GM12878 (cell line): ENCODE measurements at regions of chr3 and their contacts with region 1.

Region 1: GRCh38 chr3:8301728-8302462 is 199.7 kb upstream of the LMCD1 start:
- DNase-seq: no peak
- ATAC-seq: peak; percentile 73
- H3K4me3 ChIP-seq: no peak overlapping the region
- H3K27ac ChIP-seq: no peak overlapping the region
- H3K4me1 ChIP-seq: no peaks in the 10 kb centered on the region
- H3K27me3 ChIP-seq: no peaks in the 10 kb centered on the region
- CTCF ChIP-seq: peak; percentile 62 to 71 (median 65)
- EP300 ChIP-seq: no peak
- POLR2A ChIP-seq: no peak
- RAD21 ChIP-seq: peak; percentile 56

Region 2: GRCh38 chr3:7682822-7683229 is 619.1 kb before region 1 on chr3:
- CTCF ChIA-PET with region 1: no interaction called
- POLR2A ChIA-PET with region 1: no interaction called
- RAD21 ChIA-PET with region 1: no interaction called
- SMC1A ChIA-PET with region 1: no interaction called
- in situ Hi-C with region 1: no loop called
- intact Hi-C with region 1: no loop called
- DNase-seq: no peak
- ATAC-seq: no peak
- H3K4me3 ChIP-seq: no peak overlapping the region
- H3K27ac ChIP-seq: no peak overlapping the region
- H3K4me1 ChIP-seq: no peaks in the 10 kb centered on the region
- H3K27me3 ChIP-seq: no peaks in the 10 kb centered on the region
- CTCF ChIP-seq: no peak
- EP300 ChIP-seq: no peak
- POLR2A ChIP-seq: no peak
- RAD21 ChIP-seq: no peak

Region 3: DNA sequence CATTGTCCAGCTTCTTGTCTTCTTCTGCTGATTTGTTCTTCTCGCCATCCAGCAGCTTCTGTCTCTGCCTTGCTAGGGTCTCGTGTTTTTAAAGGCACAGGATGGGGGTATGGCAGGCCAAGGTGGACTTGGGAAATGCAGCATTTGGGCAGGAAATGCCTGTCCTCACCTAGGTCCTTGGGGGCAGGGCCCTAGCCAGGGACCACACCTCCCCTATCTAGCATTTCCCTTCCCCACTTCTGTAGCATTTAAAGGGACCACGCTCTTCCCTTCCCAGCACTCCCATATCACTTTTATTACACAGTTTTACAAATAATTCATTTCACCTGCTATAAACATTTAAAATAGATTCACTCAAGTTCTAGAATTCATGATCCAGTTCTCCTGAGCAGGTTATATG is 115.7 kb before region 1 on chr3:
- CTCF ChIA-PET with region 1: no interaction called
- POLR2A ChIA-PET with region 1: no interaction called
- RAD21 ChIA-PET with region 1: no interaction called
- SMC1A ChIA-PET with region 1: no interaction called
- in situ Hi-C with region 1: no loop called
- intact Hi-C with region 1: no loop called
- DNase-seq: no peak
- ATAC-seq: no peak
- H3K4me3 ChIP-seq: no peak overlapping the region
- H3K27ac ChIP-seq: no peak overlapping the region
- H3K4me1 ChIP-seq: no peaks in the 10 kb centered on the region
- H3K27me3 ChIP-seq: no peaks in the 10 kb centered on the region
- CTCF ChIP-seq: no peak
- EP300 ChIP-seq: no peak
- POLR2A ChIP-seq: no peak
- RAD21 ChIP-seq: no peak

Region 4: DNA sequence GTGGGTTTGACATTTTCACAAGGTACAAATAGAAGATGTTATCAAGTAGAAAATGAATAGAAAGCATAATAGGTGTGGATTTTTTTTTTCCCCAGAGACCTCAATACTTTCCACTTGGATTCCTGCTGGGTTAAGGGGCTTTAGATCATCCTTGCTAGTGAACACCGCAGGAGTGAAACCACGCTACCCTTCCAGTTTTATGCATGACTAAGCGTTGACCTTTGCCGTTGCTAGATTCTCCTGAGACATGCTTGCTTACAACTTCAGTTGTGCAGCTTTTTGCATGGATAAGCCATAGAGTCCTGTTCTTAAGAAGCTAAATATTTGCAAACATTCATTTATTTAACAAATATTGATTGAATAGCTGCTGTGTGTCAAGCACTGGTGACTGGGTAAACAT is 100.0 kb before region 1 on chr3:
- CTCF ChIA-PET with region 1: no interaction called
- POLR2A ChIA-PET with region 1: no interaction called
- RAD21 ChIA-PET with region 1: no interaction called
- SMC1A ChIA-PET with region 1: no interaction called
- in situ Hi-C with region 1: no loop called
- intact Hi-C with region 1: no loop called
- DNase-seq: no peak
- ATAC-seq: no peak
- H3K4me3 ChIP-seq: no peak overlapping the region
- H3K27ac ChIP-seq: no peak overlapping the region
- H3K4me1 ChIP-seq: no peaks in the 10 kb centered on the region
- H3K27me3 ChIP-seq: no peaks in the 10 kb centered on the region
- CTCF ChIP-seq: no peak
- EP300 ChIP-seq: no peak
- POLR2A ChIP-seq: no peak
- RAD21 ChIP-seq: no peak

Region 5: GRCh38 chr3:8286749-8287148 is 15.1 kb before region 1 on chr3:
- CTCF ChIA-PET with region 1: interaction called, 16 read pairs
- POLR2A ChIA-PET with region 1: no interaction called
- RAD21 ChIA-PET with region 1: no interaction called
- SMC1A ChIA-PET with region 1: no interaction called
- in situ Hi-C with region 1: no loop called
- intact Hi-C with region 1: no loop called
- DNase-seq: no peak
- ATAC-seq: no peak
- H3K4me3 ChIP-seq: no peak overlapping the region
- H3K27ac ChIP-seq: no peak overlapping the region
- H3K4me1 ChIP-seq: no peaks in the 10 kb centered on the region
- H3K27me3 ChIP-seq: no peaks in the 10 kb centered on the region
- CTCF ChIP-seq: no peak
- EP300 ChIP-seq: no peak
- POLR2A ChIP-seq: no peak
- RAD21 ChIP-seq: no peak

Region 6: GRCh38 chr3:8380904-8381704 is 79.2 kb after region 1 on chr3:
- CTCF ChIA-PET with region 1: no interaction called
- POLR2A ChIA-PET with region 1: no interaction called
- RAD21 ChIA-PET with region 1: no interaction called
- SMC1A ChIA-PET with region 1: no interaction called
- in situ Hi-C with region 1: no loop called
- intact Hi-C with region 1: no loop called
- DNase-seq: no peak
- ATAC-seq: no peak
- H3K4me3 ChIP-seq: no peak overlapping the region
- H3K27ac ChIP-seq: no peak overlapping the region
- H3K4me1 ChIP-seq: no peaks in the 10 kb centered on the region
- H3K27me3 ChIP-seq: no peaks in the 10 kb centered on the region
- CTCF ChIP-seq: no peak
- EP300 ChIP-seq: no peak
- POLR2A ChIP-seq: no peak
- RAD21 ChIP-seq: no peak